GM13976 (cell line): ENCODE measurements at regions of chr4 and their contacts with region 1.

Region 1: DNA sequence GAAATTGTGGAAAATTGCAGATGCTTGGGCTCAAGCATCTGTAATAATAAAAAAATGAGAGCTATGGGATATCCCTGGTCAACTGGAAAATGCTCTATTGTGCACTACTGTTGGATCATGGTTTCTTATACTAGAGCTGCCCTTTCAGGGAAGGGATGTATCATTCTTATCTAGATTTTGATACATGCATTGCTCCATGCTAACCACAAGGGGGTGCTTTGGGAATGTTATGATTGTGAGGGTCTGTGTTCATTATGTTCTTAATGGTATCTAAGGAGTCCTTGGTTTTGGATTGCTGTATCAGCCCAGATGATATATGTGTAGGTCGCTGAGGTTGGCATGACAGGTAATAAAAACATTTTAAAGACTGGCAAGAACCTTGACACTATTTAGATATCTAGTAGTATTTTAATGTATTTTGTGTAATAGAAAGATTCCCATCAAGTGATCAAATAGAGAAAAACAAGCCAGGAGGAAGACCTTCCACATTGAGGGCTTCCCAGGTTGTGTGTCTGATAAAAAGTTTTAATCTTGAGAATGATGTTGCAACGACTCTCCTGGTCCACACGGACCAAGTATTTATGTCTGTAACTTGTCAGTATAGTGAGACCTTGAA is 49.2 kb upstream of the TLR2 start:
- DNase-seq: no peak
- CTCF ChIP-seq: peak; percentile 7

Region 2: GRCh38 chr4:153344131-153345010 is 290.5 kb before region 1 on chr4 and contains the start of gene MND1:
- in situ Hi-C with region 1: loop called (anchors 10 kb)
- DNase-seq: peak; percentile 94
- CTCF ChIP-seq: peak; percentile 83

Region 3: DNA sequence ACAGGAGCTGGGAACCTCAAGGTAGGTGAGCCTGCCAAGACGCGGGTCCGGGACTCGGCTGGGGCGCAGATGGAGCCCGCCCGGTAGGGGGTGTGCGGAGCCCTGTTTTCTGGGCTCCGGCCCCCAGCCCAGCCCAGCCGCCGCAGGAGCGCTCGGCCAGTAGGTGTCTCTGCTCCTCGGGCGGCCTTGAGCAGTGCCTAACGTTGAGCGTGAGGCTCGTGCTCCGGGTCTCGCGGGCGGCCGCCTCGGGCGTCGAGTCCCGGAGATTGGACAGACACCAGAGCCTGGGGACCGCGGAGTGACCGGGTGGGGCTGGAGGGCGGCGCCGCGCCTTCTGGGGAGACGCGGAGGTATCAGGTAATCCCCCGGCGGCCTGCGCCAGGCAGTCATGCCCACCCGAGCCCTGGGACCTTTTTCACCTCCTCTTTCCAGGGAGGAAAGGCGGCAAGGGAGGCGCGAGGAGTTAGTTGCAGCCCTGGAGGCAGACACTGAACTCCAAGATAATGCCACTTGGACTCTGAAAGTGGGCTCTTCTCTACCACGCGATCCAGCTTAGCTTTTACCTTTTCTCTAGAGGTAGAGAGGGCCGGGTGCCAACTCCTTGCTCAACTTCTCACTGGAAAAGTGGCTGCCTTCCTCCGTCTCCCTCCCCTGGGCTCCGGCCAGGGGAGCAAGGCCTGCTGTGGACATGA is 992.1 kb after region 1 on chr4:
- in situ Hi-C with region 1: no loop called
- DNase-seq: peak; percentile 82
- CTCF ChIP-seq: peak; percentile 72